ENCODE measurements at regions of chr20 and their contacts with region 1.

Region 1: GRCh38 chr20:31605031-31605901 is at the start of gene ID1:
- DNase-seq: peak; percentile 97 to 98 (median 97)
- ATAC-seq: peak; percentile 77 to 87 (median 82)
- H3K4me3 ChIP-seq: peak within 1 kb of the TSS; percentile 76 to 96 (median 82)
- H3K27ac ChIP-seq: peak within 1 kb of the TSS; percentile 78 to 81 (median 79)
- H3K4me1 ChIP-seq: peaks cover 0 to 56% (median 17%) of the 10 kb centered on the region in 4 donors
- H3K27me3 ChIP-seq: no peaks in the 10 kb centered on the region
- CTCF ChIP-seq: no peak
- POLR2A ChIP-seq: peak; percentile 99
- total RNA-seq, gene ID1: 12.9 to 300 (median 35.0) TPM

Region 2: DNA sequence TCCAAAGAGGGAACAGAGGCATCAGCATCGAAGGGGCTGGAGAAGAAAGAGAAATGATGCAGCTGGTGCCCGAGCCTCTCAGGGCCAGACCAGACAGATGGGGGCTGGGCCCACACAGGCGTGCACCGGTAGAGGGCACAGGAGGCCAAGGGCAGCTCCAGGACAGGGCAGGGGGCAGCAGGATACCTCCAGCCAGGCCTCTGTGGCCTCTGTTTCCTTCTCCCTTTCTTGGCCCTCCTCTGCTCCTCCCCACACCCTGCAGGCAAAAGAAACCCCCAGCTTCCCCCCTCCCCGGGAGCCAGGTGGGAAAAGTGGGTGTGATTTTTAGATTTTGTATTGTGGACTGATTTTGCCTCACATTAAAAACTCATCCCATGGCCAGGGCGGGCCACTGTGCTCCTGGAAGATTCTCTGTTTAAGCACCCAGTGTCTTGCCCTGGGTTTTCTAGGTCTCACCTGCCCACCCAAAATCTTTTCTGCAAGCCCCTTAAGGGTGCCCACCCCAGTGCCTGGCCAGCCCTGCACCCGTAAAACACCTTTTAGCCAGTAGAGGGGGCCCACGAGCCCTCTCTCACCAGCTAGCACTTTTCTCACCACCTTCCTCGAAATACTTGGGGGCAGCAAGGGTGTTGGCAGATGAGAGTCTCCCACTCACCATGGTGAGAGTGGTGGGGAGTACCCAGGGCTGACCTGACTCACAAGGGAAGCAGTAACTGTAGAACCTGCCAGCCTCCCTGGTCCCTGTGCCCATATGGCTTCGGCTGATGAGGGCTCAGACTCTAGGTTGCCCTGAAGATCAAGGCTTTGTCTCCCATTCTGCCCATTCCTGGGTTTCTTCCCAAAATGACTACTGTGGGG is 35.9 kb before region 1 on chr20:
- intact Hi-C with region 1: loop called (anchors 2 to 5 kb)
- DNase-seq: peak; percentile 65 to 74 (median 69)
- ATAC-seq: peak; percentile 22 to 48 (median 28)
- H3K4me3 ChIP-seq: no peak overlapping the region
- H3K27ac ChIP-seq: peak overlapping the region; percentile 7 to 51 (median 45)
- H3K4me1 ChIP-seq: peaks cover 0 to 42% (median 16%) of the 10 kb centered on the region in 4 donors
- H3K27me3 ChIP-seq: no peaks in the 10 kb centered on the region
- CTCF ChIP-seq: peak; percentile 70 to 83 (median 76)
- POLR2A ChIP-seq: no peak